Sciatic nerve (tissue), 2 donors: ENCODE measurements at regions of chr20 and their contacts with region 1.

Region 1: DNA sequence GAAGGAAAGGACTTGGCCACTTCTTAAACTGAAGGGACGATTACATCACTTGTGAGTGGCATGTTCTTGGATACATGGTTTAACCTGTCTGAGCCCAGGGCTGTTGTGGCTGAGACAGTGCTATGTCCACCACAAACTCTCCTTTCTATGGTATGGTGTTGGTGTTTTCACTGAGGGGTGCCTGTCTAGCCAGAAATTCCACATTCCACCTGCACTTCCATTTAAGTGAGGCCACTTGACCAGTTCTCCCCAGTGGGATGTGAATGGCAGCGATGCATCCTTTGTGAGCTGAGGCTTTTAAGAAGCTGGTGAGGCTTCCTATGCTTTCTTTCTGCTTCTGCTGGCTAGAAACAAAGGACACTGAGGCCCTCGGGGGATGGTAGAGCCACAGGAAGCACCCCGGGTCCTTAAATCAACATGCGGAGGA is 151.4 kb upstream of the CHD6 start:
- DNase-seq: no peak
- ATAC-seq: no peak

Region 2: GRCh38 chr20:43570496-43570895 is 1800.9 kb after region 1 on chr20:
- intact Hi-C with region 1: loop called (anchors 5 kb)
- DNase-seq: no peak
- ATAC-seq: no peak